Activated CD8-positive, alpha-beta memory T cell treated with anti-CD3 and anti-CD28 coated beads, Interleukin-2, amount 10 ng/mL, durations not matched to agents 7 days and 5 days (primary cell): ENCODE measurements at regions of chr15 and their contacts with region 1.

Region 1: DNA sequence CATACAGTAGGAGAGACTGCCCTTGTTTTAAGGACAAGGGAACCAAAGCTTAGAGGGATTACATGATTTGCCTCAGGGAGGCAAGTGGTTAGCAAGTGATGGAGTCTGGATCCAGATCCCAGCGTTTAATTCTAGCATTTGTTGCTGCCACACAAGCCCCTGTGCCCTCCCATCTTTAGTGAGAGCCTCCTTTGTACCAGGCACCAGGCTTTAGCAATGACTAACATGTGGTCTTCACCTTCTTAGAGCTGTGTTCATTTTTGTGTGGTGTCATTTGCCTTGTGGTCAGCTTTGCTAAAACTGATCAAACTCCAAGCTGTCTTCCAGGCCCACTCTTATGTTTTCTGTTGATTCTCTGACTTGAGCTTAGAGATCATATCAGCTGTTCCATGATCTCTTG is 290.5 kb downstream of the RPLP1 start:
- DNase-seq: no peak
- ATAC-seq: peak; percentile 53
- H3K4me3 Mint-ChIP-seq: no peak overlapping the region
- H3K27ac Mint-ChIP-seq: no peak overlapping the region
- H3K4me1 Mint-ChIP-seq: peaks cover 24% of the 10 kb centered on the region
- H3K27me3 Mint-ChIP-seq: peaks cover 34% of the 10 kb centered on the region

Region 2: GRCh38 chr15:69523010-69524001 is 219.8 kb before region 1 on chr15:
- CTCF ChIA-PET with region 1: no interaction called
- DNase-seq: peak; percentile 78
- ATAC-seq: no peak
- H3K4me3 Mint-ChIP-seq: no peak overlapping the region
- H3K27ac Mint-ChIP-seq: no peak overlapping the region
- H3K4me1 Mint-ChIP-seq: no peaks in the 10 kb centered on the region
- H3K27me3 Mint-ChIP-seq: peaks cover 27% of the 10 kb centered on the region

Region 3: GRCh38 chr15:69729161-69729748 is 13.8 kb before region 1 on chr15:
- CTCF ChIA-PET with region 1: interaction called, 12 read pairs
- DNase-seq: peak; percentile 79
- ATAC-seq: peak; percentile 27
- H3K4me3 Mint-ChIP-seq: no peak overlapping the region
- H3K27ac Mint-ChIP-seq: no peak overlapping the region
- H3K4me1 Mint-ChIP-seq: peaks cover 18% of the 10 kb centered on the region
- H3K27me3 Mint-ChIP-seq: peaks cover 49% of the 10 kb centered on the region

Region 4: DNA sequence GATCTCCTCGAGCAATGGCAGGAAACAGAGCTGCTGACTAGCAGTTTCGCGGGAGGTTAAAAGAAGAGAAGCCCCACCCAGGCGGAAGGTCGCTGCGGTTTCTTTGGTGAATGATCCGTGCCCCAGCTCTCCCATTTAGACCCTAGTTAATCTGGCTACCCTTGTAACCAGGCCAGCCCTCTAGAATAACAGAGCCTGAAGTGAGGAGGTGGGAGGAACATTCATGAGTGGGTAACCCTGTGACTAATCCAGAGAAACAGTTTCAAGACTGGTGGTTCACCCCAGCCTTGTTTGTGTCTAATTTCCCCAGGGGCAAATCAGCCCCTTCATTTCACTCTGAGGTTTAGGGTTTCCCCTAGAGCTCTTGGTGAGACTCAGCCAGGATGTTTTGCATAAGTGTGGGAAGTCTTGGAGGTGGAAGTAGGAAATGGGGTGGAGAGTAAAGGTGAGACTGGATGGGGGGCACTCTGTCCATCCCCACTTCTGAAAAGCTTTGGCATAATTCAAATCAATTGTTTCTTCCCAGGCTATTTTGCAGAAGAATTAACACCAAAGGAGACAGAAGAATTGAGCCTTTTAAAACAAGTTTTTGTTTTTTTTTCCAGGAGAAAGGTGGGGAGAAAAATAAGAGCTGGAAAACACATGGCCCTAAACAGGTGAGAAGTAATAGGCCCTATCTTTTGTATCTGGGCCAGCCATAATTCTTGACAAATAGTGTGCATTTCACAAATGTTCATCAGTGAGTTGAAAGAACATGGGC is 12.6 kb after region 1 on chr15:
- CTCF ChIA-PET with region 1: interaction called, 14 read pairs
- DNase-seq: peak; percentile 91
- ATAC-seq: peak; percentile 79
- H3K4me3 Mint-ChIP-seq: peak overlapping the region; percentile 9
- H3K27ac Mint-ChIP-seq: peak overlapping the region; percentile 57
- H3K4me1 Mint-ChIP-seq: peaks cover 70% of the 10 kb centered on the region
- H3K27me3 Mint-ChIP-seq: peaks cover 23% of the 10 kb centered on the region